Activated CD4-positive, alpha-beta T cell treated with anti-CD3 and anti-CD28 coated beads for 36 hours (primary cell): ENCODE measurements at regions of chr6 and their contacts with region 1.

Region 1: DNA sequence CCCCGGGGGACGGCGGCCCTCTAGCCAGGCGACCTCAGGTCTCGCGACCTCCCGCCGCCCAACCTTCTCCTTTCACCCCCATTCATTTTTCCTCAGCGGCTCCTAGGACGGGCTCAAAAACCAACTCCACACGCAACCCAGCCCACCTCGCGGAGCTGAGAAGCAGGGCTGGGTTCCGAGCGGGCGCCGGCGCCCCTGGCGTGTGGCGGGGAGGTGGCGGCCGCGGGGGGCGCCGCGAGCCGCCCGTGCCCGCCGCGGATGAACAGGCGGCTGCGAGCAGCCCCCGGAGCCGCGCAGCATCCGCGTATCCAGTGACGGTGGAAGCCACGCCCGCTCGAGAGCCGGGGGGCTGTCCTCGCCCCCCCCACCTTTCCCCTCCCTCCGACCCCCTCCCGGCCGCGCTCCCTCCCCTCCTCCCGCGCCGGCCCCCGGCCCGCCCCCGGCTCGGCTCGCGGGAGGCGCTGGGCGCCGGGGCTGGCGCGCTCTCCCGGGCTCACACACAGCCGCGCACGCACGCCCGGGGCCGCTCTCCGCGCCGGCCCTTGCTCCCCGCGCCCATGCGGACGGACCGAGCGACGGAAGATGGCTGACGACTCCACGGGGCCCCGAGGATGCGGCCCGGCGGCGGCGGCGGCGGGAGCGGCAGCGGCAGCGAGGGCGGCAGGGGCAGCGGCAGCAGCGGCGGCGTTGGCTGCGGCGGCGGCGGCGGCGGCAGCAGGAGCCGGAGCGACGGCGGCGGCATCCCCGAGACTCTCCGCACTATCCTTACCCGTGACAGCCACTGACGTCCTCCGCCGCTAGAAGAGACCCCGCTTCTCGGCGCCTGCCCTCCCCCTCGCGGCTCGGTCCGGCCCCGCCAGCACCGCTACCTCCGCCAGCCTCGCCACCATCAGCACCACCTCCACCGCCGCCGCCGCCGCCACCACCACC is at the start of gene SOBP:
- DNase-seq: peak; percentile 55
- ATAC-seq: peak; percentile 61
- H3K4me3 Mint-ChIP-seq: peak within 1 kb of the TSS; percentile 79
- H3K27ac Mint-ChIP-seq: peak within 1 kb of the TSS; percentile 84
- H3K4me1 Mint-ChIP-seq: peaks cover 25% of the 10 kb centered on the region
- H3K27me3 Mint-ChIP-seq: peaks cover 41% of the 10 kb centered on the region
- total RNA-seq, gene SOBP: 0.23 to 0.49 TPM

Region 2: GRCh38 chr6:107114213-107114905 is 375.5 kb before region 1 on chr6:
- CTCF ChIA-PET with region 1: interaction called, 3 read pairs
- POLR2A ChIA-PET with region 1: no interaction called
- intact Hi-C with region 1: loop called (anchors 2 to 10 kb)
- DNase-seq: peak; percentile 84
- ATAC-seq: peak; percentile 62
- H3K4me3 Mint-ChIP-seq: peak overlapping the region; percentile 67
- H3K27ac Mint-ChIP-seq: peak overlapping the region; percentile 65
- H3K4me1 Mint-ChIP-seq: peaks cover 21% of the 10 kb centered on the region
- H3K27me3 Mint-ChIP-seq: peaks cover 5% of the 10 kb centered on the region

Region 3: GRCh38 chr6:107132330-107132954 is 357.5 kb before region 1 on chr6:
- CTCF ChIA-PET with region 1: no interaction called
- POLR2A ChIA-PET with region 1: no interaction called
- intact Hi-C with region 1: no loop called
- DNase-seq: peak; percentile 50
- ATAC-seq: no peak
- H3K4me3 Mint-ChIP-seq: no peak overlapping the region
- H3K27ac Mint-ChIP-seq: no peak overlapping the region
- H3K4me1 Mint-ChIP-seq: no peaks in the 10 kb centered on the region
- H3K27me3 Mint-ChIP-seq: no peaks in the 10 kb centered on the region

Region 4: GRCh38 chr6:107318100-107318736 is 171.7 kb before region 1 on chr6:
- CTCF ChIA-PET with region 1: interaction called, 5 read pairs
- POLR2A ChIA-PET with region 1: no interaction called
- intact Hi-C with region 1: loop called (anchors 5 to 10 kb)
- DNase-seq: peak; percentile 71
- ATAC-seq: peak; percentile 72
- H3K4me3 Mint-ChIP-seq: no peak overlapping the region
- H3K27ac Mint-ChIP-seq: no peak overlapping the region
- H3K4me1 Mint-ChIP-seq: peaks cover 18% of the 10 kb centered on the region
- H3K27me3 Mint-ChIP-seq: no peaks in the 10 kb centered on the region

Region 5: DNA sequence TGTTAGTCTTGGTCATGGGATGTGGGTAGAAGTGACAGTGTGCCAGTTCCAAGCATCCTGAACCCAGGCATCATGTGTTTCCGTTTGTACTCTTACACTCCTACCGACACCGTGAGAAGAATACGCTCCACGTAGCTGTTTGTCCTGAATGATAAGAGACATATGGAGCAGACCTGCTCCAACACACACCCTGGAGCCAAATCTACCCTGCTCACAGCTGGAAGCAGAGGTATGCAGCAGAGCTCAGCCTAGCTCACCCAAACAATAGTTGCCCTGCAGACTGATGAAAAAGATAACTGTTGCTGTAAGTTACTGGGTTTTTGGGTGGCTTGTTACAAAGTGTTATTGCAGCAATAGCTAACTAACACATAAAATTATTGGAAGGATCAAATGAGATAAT is 16.2 kb before region 1 on chr6:
- CTCF ChIA-PET with region 1: interaction called, 10 read pairs
- POLR2A ChIA-PET with region 1: interaction called, 3 read pairs
- intact Hi-C with region 1: no loop called
- DNase-seq: no peak
- ATAC-seq: no peak
- H3K4me3 Mint-ChIP-seq: no peak overlapping the region
- H3K27ac Mint-ChIP-seq: no peak overlapping the region
- H3K4me1 Mint-ChIP-seq: no peaks in the 10 kb centered on the region
- H3K27me3 Mint-ChIP-seq: peaks cover 16% of the 10 kb centered on the region

Region 6: DNA sequence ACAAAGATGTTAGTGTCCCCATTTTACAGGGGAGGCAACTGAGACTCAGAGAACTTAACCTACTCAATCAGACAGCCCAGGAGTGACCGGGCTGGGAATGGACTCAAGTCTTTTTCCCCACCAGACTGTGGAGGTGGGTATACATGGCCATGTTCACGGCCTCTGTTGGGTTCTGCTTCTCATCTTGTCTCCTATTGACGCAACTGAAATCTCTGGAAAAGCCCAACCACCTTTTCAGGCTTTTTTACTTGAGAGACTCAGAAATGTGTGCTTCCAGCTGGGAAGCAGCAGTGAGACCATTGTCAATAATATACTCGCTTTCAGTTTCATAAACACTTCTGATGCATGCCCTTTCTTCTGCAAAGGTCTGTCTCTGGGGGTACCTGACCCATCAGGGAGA is 70.8 kb after region 1 on chr6:
- CTCF ChIA-PET with region 1: no interaction called
- POLR2A ChIA-PET with region 1: no interaction called
- intact Hi-C with region 1: no loop called
- DNase-seq: no peak
- ATAC-seq: no peak
- H3K4me3 Mint-ChIP-seq: no peak overlapping the region
- H3K27ac Mint-ChIP-seq: no peak overlapping the region
- H3K4me1 Mint-ChIP-seq: no peaks in the 10 kb centered on the region
- H3K27me3 Mint-ChIP-seq: peaks cover 14% of the 10 kb centered on the region

Region 7: DNA sequence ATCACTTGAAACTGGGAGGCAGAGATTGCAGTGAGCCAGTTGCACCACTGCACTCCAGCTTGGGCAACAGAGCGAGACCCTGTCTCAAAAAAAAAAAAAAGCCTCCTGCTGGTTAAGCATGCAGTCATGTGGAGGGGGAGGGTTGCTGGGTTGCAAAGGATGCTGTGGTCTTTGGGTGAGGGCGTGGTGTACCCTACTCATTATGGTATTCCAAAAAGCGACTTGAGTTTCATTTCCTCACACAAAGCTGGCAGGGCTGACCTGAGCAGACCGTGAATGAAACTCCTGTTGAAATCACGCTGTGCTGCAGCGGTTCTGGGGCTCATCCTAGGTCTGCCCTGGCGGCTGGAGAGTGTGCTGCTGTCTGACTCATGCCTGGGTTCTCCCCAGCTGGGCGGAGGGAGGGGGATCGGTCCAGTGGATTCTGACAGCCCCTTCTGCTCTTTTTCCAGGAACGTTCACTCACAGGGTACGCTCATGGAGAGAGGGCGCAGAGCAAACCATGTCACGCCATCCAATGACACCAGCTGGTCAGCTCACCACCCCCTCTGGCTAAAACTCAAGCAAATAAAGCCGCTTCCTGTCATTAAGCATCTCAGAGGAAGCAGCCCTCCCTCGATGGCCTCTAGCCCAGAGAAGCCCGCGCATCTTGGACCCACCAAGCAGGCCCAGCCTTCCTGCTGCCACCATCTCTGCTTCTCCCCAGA is 168.0 kb after region 1 on chr6:
- CTCF ChIA-PET with region 1: no interaction called
- POLR2A ChIA-PET with region 1: no interaction called
- intact Hi-C with region 1: loop called in 1 of 2 experiments (anchors 5 kb)
- DNase-seq: peak; percentile 81
- ATAC-seq: peak; percentile 99
- H3K4me3 Mint-ChIP-seq: peak overlapping the region; percentile 8
- H3K27ac Mint-ChIP-seq: no peak overlapping the region
- H3K4me1 Mint-ChIP-seq: peaks cover 27% of the 10 kb centered on the region
- H3K27me3 Mint-ChIP-seq: no peaks in the 10 kb centered on the region

Region 8: GRCh38 chr6:108168501-108169463 is 678.9 kb after region 1 on chr6:
- CTCF ChIA-PET with region 1: no interaction called
- POLR2A ChIA-PET with region 1: no interaction called
- intact Hi-C with region 1: loop called in 1 of 2 experiments (anchors 5 kb)
- DNase-seq: peak; percentile 46
- ATAC-seq: peak; percentile 54
- H3K4me3 Mint-ChIP-seq: peak overlapping the region; percentile 49
- H3K27ac Mint-ChIP-seq: no peak overlapping the region
- H3K4me1 Mint-ChIP-seq: peaks cover 40% of the 10 kb centered on the region
- H3K27me3 Mint-ChIP-seq: peaks cover 81% of the 10 kb centered on the region